ENCODE measurements at regions of chr15 and their contacts with region 1.

Region 1: DNA sequence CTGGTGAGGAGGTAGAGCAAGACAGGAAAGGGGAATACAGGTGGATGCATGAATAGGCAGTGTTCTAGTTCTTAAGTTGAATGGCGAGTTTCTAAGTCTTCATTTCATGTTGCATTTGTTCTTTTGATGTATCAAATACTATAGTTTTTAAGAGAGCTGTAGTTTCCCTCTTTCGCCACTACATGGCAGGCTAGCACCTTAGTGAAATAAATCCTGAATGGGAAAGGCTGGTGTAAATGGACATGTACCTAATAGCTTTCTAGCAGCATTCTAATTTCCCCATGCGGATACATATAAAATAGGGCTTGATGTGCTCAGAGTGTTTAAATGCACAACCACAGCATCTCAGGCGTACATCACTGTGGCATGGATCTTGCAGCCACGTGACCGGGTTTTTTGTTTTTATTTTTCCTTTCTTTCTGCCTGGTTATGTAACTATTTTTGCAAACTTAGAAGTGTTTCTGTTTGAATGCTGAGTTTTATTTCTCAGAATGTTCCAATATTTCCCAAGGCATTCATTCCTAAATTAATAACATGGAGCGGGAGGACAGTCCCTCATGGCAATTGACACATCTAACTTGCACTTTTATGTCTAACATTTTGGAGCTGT is 23.5 kb upstream of the CLN6 start:
- DNase-seq: peak; percentile 59
- H3K4me3 Mint-ChIP-seq: no peak overlapping the region
- H3K27ac Mint-ChIP-seq: no peak overlapping the region
- H3K4me1 Mint-ChIP-seq: no peaks in the 10 kb centered on the region
- H3K27me3 Mint-ChIP-seq: peaks cover 17% of the 10 kb centered on the region
- CTCF ChIP-seq: peak; percentile 51

Region 2: DNA sequence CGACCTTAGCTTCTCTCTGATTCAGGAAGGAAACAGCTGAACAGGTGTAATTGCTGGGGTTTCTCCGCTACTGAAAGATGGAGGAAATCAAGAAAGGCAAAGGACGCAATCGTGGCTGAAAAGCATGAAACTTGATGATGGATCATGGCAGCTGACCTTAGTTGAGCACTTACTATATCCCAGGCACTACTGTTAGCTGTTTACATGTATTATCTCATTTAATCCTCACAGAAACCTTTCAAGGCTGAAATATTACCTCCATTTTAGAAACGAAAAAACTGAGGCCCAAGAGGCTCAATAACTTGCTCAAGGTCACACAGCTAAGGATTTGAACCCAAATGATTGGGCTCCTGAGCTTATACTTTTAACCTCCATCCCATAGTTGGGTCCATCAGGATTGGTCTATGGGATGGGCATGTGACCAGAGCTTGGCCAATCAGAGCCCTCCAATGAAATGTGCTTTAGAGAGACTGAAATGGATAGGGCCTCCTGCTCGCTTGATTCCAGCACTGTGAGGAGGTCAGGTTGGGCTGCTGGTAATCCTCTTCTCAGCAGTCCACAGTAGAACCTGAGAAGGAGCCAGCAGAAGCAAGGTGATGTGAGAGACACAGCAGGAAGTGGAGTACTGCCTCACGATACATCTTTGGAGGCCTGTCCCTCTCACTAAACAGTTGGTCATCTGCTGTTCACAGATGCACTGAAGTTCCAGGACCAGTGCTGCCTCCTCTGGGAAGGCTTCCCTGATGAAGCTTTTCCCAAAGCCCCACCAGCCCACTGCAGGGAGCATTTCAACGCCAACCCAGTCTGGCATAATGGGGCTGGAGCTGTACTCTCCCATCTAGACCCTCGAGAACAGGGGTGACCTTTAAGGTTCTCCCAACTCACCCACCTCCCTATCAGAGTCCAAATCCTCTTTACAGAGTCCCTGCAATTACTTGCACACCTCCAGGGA is 33.9 kb before region 1 on chr15:
- CTCF ChIA-PET with region 1: no interaction called
- intact Hi-C with region 1: no loop called
- DNase-seq: no peak
- H3K4me3 Mint-ChIP-seq: no peak overlapping the region
- H3K27ac Mint-ChIP-seq: no peak overlapping the region
- H3K4me1 Mint-ChIP-seq: no peaks in the 10 kb centered on the region
- H3K27me3 Mint-ChIP-seq: no peaks in the 10 kb centered on the region
- CTCF ChIP-seq: no peak

Region 3: GRCh38 chr15:68229386-68230156 is 23.5 kb before region 1 on chr15 and contains the start of gene CLN6:
- CTCF ChIA-PET with region 1: interaction called, 10 read pairs
- intact Hi-C with region 1: no loop called
- DNase-seq: peak; percentile 90
- H3K4me3 Mint-ChIP-seq: peak within 1 kb of the TSS; percentile 93
- H3K27ac Mint-ChIP-seq: peak within 1 kb of the TSS; percentile 65
- H3K4me1 Mint-ChIP-seq: peaks cover 28% of the 10 kb centered on the region
- H3K27me3 Mint-ChIP-seq: peaks cover 10% of the 10 kb centered on the region
- CTCF ChIP-seq: no peak
- total RNA-seq, gene CLN6: 81.6 and 85.7 TPM in 2 replicates

Region 4: DNA sequence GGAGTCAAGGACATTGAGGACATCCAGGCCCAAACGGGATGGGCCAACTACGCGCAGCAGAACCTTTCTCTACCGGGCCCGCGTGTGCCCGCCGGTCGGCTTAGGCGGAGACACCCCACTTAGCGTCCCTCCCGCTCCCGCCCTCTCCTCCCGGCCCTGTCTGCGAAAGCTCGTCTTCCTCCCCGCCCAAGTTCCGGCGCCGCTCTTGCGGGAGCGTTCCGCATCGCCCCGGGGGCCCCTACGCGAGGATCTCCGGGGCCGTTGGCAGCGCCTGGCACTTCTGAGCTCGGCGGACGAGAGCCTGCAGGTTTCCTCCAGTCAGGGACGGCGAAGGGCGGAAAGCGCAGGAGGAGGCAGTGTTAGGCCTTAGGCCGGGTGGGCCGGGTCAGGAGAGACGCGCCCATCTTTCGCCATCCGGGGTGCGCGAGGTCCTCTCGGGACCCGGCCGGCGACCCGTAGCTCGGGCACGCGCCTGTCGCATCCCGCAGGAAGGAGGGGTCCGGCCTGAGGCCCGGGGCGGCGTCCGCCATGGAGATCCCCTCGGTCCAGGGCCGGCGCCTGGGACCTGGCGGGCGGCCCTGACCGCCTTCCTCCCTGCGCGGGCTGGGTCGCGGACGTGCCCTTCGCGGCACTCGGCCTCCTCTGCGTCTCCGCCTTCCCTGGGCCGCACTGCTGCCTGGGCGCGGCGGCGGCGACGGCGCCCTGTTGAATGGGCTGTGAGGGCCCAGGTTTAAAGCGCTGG is 24.7 kb after region 1 on chr15 and contains the start of gene FEM1B:
- CTCF ChIA-PET with region 1: interaction called, 15 read pairs
- intact Hi-C with region 1: no loop called
- DNase-seq: peak; percentile 93
- H3K4me3 Mint-ChIP-seq: peak within 1 kb of the TSS; percentile 98
- H3K27ac Mint-ChIP-seq: peak within 1 kb of the TSS; percentile 96
- H3K4me1 Mint-ChIP-seq: peaks cover 70% of the 10 kb centered on the region
- H3K27me3 Mint-ChIP-seq: no peaks in the 10 kb centered on the region
- CTCF ChIP-seq: no peak
- total RNA-seq, gene FEM1B: 41.4 and 53.3 TPM in 2 replicates

Region 5: GRCh38 chr15:68304589-68305337 is 51.7 kb after region 1 on chr15:
- CTCF ChIA-PET with region 1: interaction called, 72 read pairs
- intact Hi-C with region 1: loop called (anchors 1 kb)
- DNase-seq: no peak
- H3K4me3 Mint-ChIP-seq: no peak overlapping the region
- H3K27ac Mint-ChIP-seq: no peak overlapping the region
- H3K4me1 Mint-ChIP-seq: peaks cover 13% of the 10 kb centered on the region
- H3K27me3 Mint-ChIP-seq: peaks cover 33% of the 10 kb centered on the region
- CTCF ChIP-seq: no peak

Region 6: GRCh38 chr15:68316061-68316804 is 63.2 kb after region 1 on chr15:
- CTCF ChIA-PET with region 1: interaction called, 19 read pairs
- intact Hi-C with region 1: no loop called
- DNase-seq: peak; percentile 39
- H3K4me3 Mint-ChIP-seq: no peak overlapping the region
- H3K27ac Mint-ChIP-seq: no peak overlapping the region
- H3K4me1 Mint-ChIP-seq: no peaks in the 10 kb centered on the region
- H3K27me3 Mint-ChIP-seq: peaks cover 99% of the 10 kb centered on the region
- CTCF ChIP-seq: peak; percentile 54

Region 7: GRCh38 chr15:68365140-68365745 is 112.2 kb after region 1 on chr15:
- CTCF ChIA-PET with region 1: no interaction called
- intact Hi-C with region 1: no loop called
- DNase-seq: no peak
- H3K4me3 Mint-ChIP-seq: no peak overlapping the region
- H3K27ac Mint-ChIP-seq: no peak overlapping the region
- H3K4me1 Mint-ChIP-seq: no peaks in the 10 kb centered on the region
- H3K27me3 Mint-ChIP-seq: no peaks in the 10 kb centered on the region
- CTCF ChIP-seq: no peak

Region 8: GRCh38 chr15:68383161-68384074 is 130.4 kb after region 1 on chr15:
- CTCF ChIA-PET with region 1: no interaction called
- intact Hi-C with region 1: loop called (anchors 1 kb)
- DNase-seq: peak; percentile 61
- H3K4me3 Mint-ChIP-seq: no peak overlapping the region
- H3K27ac Mint-ChIP-seq: no peak overlapping the region
- H3K4me1 Mint-ChIP-seq: no peaks in the 10 kb centered on the region
- H3K27me3 Mint-ChIP-seq: peaks cover 57% of the 10 kb centered on the region
- CTCF ChIP-seq: peak; percentile 64

Region 9: DNA sequence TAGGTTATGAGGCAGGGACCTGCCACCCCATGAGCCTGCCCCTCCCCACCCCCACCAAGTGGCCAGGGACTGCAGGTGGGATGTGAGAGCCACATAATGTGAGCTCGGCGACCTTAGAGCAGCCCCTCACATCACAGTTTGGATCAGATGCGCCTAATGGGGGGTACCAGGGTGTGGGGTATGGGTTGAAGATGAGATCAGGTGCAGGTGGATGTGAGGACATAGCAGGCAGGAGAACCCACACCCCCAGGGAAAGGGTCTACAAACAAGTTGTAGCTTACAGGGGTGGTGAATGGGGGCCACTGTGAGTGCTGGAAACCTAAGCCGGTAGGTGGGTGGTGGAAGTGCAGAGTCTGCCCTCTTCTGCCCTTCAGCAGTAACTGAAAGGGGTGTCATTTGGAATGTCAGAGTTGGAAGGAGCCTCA is 419.8 kb after region 1 on chr15:
- CTCF ChIA-PET with region 1: interaction called, 9 read pairs
- intact Hi-C with region 1: loop called (anchors 10 kb)
- DNase-seq: no peak
- H3K4me3 Mint-ChIP-seq: no peak overlapping the region
- H3K27ac Mint-ChIP-seq: no peak overlapping the region
- H3K4me1 Mint-ChIP-seq: peaks cover 9% of the 10 kb centered on the region
- H3K27me3 Mint-ChIP-seq: peaks cover 80% of the 10 kb centered on the region
- CTCF ChIP-seq: peak; percentile 21

Measured in Calu3 (cell line).